A673 (cell line): ENCODE measurements at regions of chr22 and their contacts with region 1.

Region 1: GRCh38 chr22:25110846-25111578 is 88.6 kb upstream of the CRYBB3 start:
- DNase-seq: peak; percentile 79
- H3K4me3 ChIP-seq: peak overlapping the region; percentile 49
- H3K27ac ChIP-seq: no peak overlapping the region
- H3K4me1 ChIP-seq: peaks cover 4% of the 10 kb centered on the region
- H3K27me3 ChIP-seq: no peaks in the 10 kb centered on the region
- CTCF ChIP-seq: peak; percentile 67

Region 2: DNA sequence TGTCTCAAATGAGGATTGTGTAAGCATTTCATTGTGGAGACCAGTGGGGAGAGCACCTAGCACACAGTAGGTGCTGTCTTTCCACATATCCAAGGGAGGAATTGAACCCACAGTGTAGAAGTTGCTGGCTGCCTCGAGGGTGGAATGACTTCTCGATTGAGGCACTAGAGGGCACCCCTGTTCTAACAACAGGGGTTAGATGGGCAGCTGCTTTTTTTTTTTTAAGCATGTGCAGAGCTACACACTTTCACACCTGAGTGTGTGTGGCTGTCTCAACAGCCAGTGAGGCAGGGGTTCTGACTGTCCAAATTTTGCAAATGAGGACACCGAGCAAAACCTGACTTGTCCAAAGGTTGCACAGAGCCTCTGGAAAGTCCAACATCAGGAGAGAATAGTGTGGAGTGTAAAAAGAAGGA is 29.6 kb before region 1 on chr22:
- CTCF ChIA-PET with region 1: no interaction called
- POLR2A ChIA-PET with region 1: no interaction called
- intact Hi-C with region 1: loop called (anchors 1 kb)
- DNase-seq: peak; percentile 47
- H3K4me3 ChIP-seq: no peak overlapping the region
- H3K27ac ChIP-seq: no peak overlapping the region
- H3K4me1 ChIP-seq: no peaks in the 10 kb centered on the region
- H3K27me3 ChIP-seq: no peaks in the 10 kb centered on the region
- CTCF ChIP-seq: peak; percentile 65

Region 3: GRCh38 chr22:25172153-25172552 is 61.1 kb after region 1 on chr22:
- CTCF ChIA-PET with region 1: no interaction called
- POLR2A ChIA-PET with region 1: no interaction called
- intact Hi-C with region 1: no loop called
- DNase-seq: no peak
- H3K4me3 ChIP-seq: no peak overlapping the region
- H3K27ac ChIP-seq: no peak overlapping the region
- H3K4me1 ChIP-seq: no peaks in the 10 kb centered on the region
- H3K27me3 ChIP-seq: no peaks in the 10 kb centered on the region
- CTCF ChIP-seq: peak; percentile 37

Region 4: DNA sequence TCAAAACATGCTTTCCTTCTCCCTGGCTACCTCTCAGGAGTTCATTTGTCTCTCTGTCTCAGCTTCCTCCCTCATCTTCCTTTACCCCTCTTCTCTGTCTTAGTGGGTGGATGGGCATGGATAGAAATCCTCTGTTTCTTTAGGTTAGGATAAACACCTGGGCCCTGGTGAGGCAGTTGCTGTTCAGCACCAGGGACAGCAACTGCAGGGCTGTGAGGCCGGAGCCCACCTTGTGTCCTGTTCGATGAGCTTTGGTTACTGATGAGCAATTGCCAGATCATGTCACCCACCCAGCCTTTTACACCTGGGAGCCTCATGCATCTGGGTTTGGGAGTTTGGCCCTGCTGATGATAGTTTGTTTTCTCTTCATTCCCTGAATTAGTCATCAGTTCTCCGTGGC is 82.5 kb after region 1 on chr22:
- CTCF ChIA-PET with region 1: no interaction called
- POLR2A ChIA-PET with region 1: no interaction called
- intact Hi-C with region 1: no loop called
- DNase-seq: no peak
- H3K4me3 ChIP-seq: no peak overlapping the region
- H3K27ac ChIP-seq: no peak overlapping the region
- H3K4me1 ChIP-seq: no peaks in the 10 kb centered on the region
- H3K27me3 ChIP-seq: no peaks in the 10 kb centered on the region
- CTCF ChIP-seq: no peak